IMR-90 (cell line): ENCODE measurements at regions of chr5 and their contacts with region 1.

Region 1: DNA sequence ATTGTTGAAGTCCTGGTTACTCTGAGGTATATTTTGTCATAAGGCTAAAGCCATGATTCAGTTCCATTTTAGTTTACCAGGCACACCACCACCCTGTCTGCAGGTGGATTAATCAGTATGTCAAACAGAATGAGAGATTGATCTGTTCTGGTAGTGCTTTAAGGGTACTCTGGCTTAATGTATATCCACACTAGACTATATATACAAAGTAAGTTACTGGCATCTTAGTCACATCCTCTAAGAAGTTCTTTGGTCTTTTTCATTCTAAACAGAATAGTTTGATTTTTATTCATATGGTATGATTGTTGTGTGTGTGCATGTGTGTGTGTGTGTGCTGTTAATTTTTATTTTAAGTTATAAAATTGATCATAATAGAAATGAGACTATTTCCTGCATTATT is 61.8 kb downstream of the RAB24 start:
- DNase-seq: peak; percentile 62
- ATAC-seq: peak; percentile 78
- H3K4me3 ChIP-seq: no peak overlapping the region
- H3K27ac ChIP-seq: no peak overlapping the region
- H3K4me1 ChIP-seq: peaks cover 5% of the 10 kb centered on the region; the same call in 1 of the 2 replicates
- H3K27me3 ChIP-seq: no peaks in the 10 kb centered on the region
- CTCF ChIP-seq: no peak
- POLR2A ChIP-seq: no peak
- RAD21 ChIP-seq: no peak

Region 2: DNA sequence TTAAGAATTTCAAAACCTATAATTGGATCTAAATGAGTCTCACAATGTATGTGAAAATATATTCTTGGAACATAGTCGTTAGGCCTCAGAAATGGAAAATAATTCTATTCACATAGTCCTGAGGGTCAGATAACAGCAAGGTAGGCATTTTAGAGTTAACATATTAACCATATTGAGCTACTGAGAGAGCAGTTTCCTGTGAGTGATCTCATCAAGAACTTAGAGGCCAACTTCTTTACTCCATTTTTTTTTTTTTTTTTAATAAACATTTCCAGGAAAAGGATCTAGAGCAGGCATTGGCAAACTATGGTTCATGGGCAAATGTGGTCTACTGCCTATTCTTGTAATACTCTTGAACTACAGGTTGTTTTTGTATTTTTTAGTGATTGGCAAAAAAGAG is 35.1 kb after region 1 on chr5:
- CTCF ChIA-PET with region 1: no interaction called
- POLR2A ChIA-PET with region 1: no interaction called
- dilution Hi-C with region 1: no loop called
- in situ Hi-C with region 1: no loop called
- intact Hi-C with region 1: loop called (anchors 5 kb)
- DNase-seq: peak; percentile 12
- ATAC-seq: no peak
- H3K4me3 ChIP-seq: no peak overlapping the region
- H3K27ac ChIP-seq: no peak overlapping the region
- H3K4me1 ChIP-seq: peaks cover 2% of the 10 kb centered on the region
- H3K27me3 ChIP-seq: no peaks in the 10 kb centered on the region
- CTCF ChIP-seq: no peak
- POLR2A ChIP-seq: no peak
- RAD21 ChIP-seq: no peak